Naive thymus-derived CD4-positive, alpha-beta T cell (primary cell): ENCODE measurements at regions of chr3 and their contacts with region 1.

Region 1: GRCh38 chr3:124351430-124352148 is 359.7 kb upstream of the ROPN1 start:
- DNase-seq: no peak
- ATAC-seq: no peak
- H3K4me3 ChIP-seq: no peak overlapping the region
- H3K4me3 Mint-ChIP-seq: no peak overlapping the region
- H3K27ac ChIP-seq: no peak overlapping the region
- H3K27ac Mint-ChIP-seq: no peak overlapping the region
- H3K4me1 ChIP-seq: no peaks in the 10 kb centered on the region
- H3K4me1 Mint-ChIP-seq: no peaks in the 10 kb centered on the region
- H3K27me3 ChIP-seq: no peaks in the 10 kb centered on the region
- H3K27me3 Mint-ChIP-seq: peaks cover 0 to 15% (median 5%) of the 10 kb centered on the region in 5 donors

Region 2: GRCh38 chr3:123773681-123774431 is 577.7 kb before region 1 on chr3:
- CTCF ChIA-PET with region 1: no interaction called
- POLR2A ChIA-PET with region 1: no interaction called
- intact Hi-C with region 1: no loop called
- DNase-seq: no peak
- ATAC-seq: no peak
- H3K4me3 ChIP-seq: no peak overlapping the region
- H3K4me3 Mint-ChIP-seq: no peak overlapping the region
- H3K27ac ChIP-seq: no peak overlapping the region
- H3K27ac Mint-ChIP-seq: peak overlapping the region in 1 of 9 donors; percentile 23
- H3K4me1 ChIP-seq: no peaks in the 10 kb centered on the region
- H3K4me1 Mint-ChIP-seq: no peaks in the 10 kb centered on the region
- H3K27me3 ChIP-seq: no peaks in the 10 kb centered on the region
- H3K27me3 Mint-ChIP-seq: peaks cover 0 to 12% (median 7%) of the 10 kb centered on the region in 5 donors

Region 3: DNA sequence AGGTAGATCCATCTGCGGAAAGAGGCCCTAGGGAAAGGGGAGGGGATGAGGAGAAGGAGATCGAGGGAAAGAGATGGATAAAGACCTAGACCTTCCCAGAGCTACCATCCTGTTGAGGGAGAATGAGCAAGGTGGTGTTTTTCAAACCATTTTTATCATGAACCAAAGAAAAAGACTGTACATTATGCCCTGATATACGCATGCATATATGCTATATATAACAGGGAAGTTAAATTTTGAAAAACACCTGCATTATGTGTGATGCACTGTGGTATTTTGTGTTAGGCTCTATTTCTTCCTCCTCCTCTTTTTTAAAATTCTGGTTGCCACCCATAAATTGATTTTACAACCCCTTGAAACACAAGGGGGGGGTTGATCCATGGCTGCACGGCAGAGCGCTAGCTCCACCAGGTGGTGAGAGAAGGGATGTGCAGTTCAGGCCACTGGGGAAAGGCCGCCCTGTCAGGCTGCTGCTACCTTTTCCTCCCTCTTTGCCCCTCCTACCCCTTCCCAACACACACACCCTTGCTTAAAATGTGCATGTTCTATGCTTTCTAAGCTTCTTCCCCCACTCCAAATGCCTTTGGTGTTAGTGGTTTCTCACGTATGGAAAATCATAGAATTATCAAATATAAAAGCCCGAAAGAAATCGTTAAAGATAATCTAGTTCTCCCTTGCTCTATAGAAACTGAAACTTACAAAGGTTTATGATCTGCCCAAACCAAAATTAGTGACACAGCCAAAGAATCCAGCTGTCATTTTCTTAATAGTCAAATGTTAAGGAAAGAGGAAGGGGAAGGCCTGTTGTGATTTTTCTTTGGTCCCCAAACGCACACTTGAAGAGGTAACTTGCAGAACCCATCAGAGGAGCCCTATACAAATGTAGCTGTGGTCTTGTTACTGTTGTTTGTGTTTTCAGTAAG is 116.7 kb after region 1 on chr3:
- CTCF ChIA-PET with region 1: no interaction called
- POLR2A ChIA-PET with region 1: no interaction called
- intact Hi-C with region 1: loop called in 1 of 2 experiments (anchors 1 kb)
- DNase-seq: peak in 1 of 9 donors; percentile 30
- ATAC-seq: no peak
- H3K4me3 ChIP-seq: no peak overlapping the region
- H3K4me3 Mint-ChIP-seq: no peak overlapping the region
- H3K27ac ChIP-seq: no peak overlapping the region
- H3K27ac Mint-ChIP-seq: no peak overlapping the region
- H3K4me1 ChIP-seq: no peaks in the 10 kb centered on the region
- H3K4me1 Mint-ChIP-seq: no peaks in the 10 kb centered on the region
- H3K27me3 ChIP-seq: no peaks in the 10 kb centered on the region
- H3K27me3 Mint-ChIP-seq: peaks cover 23 to 66% (median 40%) of the 10 kb centered on the region in 5 donors

Region 4: GRCh38 chr3:126064627-126065258 is 1713.2 kb after region 1 on chr3:
- CTCF ChIA-PET with region 1: no interaction called
- POLR2A ChIA-PET with region 1: no interaction called
- intact Hi-C with region 1: no loop called
- DNase-seq: no peak
- ATAC-seq: peak; percentile 4
- H3K4me3 ChIP-seq: no peak overlapping the region
- H3K4me3 Mint-ChIP-seq: no peak overlapping the region
- H3K27ac ChIP-seq: no peak overlapping the region
- H3K27ac Mint-ChIP-seq: peak overlapping the region in 2 of 9 donors; percentile 32 to 68
- H3K4me1 ChIP-seq: peaks cover 7 to 11% of the 10 kb centered on the region in 2 donors
- H3K4me1 Mint-ChIP-seq: peaks cover 11 to 25% (median 20%) of the 10 kb centered on the region in 7 donors
- H3K27me3 ChIP-seq: no peaks in the 10 kb centered on the region
- H3K27me3 Mint-ChIP-seq: no peaks in the 10 kb centered on the region